PC-9 (cell line): ENCODE measurements at regions of chr1 and their contacts with region 1.

Region 1: GRCh38 chr1:6359216-6360116 is 34.1 kb downstream of the ACOT7 start:
- DNase-seq: peak; percentile 42 to 55
- H3K4me3 ChIP-seq: no peak overlapping the region
- H3K27ac ChIP-seq: no peak overlapping the region
- H3K4me1 ChIP-seq: 0 out of 2 replicates have a peak, but pooled peaks cover 5% of the 10 kb centered on the region
- H3K27me3 ChIP-seq: no peaks in the 10 kb centered on the region
- CTCF ChIP-seq: no peak

Region 2: GRCh38 chr1:6385488-6386191 is 26.2 kb after region 1 on chr1:
- CTCF ChIA-PET with region 1: interaction called, 3 read pairs
- POLR2A ChIA-PET with region 1: interaction called, 4 read pairs
- intact Hi-C with region 1: loop called (anchors 1 kb)
- DNase-seq: peak; percentile 89 to 92
- H3K4me3 ChIP-seq: peak overlapping the region; percentile 50; the same call in 1 of the 2 replicates
- H3K27ac ChIP-seq: peak overlapping the region; percentile 84
- H3K4me1 ChIP-seq: peaks cover 17% of the 10 kb centered on the region
- H3K27me3 ChIP-seq: no peaks in the 10 kb centered on the region
- CTCF ChIP-seq: no peak

Region 3: GRCh38 chr1:6393400-6394187 is 34.1 kb after region 1 on chr1 and contains the start of gene ACOT7:
- CTCF ChIA-PET with region 1: no interaction called
- POLR2A ChIA-PET with region 1: interaction called, 9 read pairs
- intact Hi-C with region 1: loop called (anchors 2 kb)
- DNase-seq: peak; percentile 69 to 86
- H3K4me3 ChIP-seq: peak within 1 kb of the TSS; percentile 60
- H3K27ac ChIP-seq: peak within 1 kb of the TSS; percentile 69
- H3K4me1 ChIP-seq: peaks cover 4% of the 10 kb centered on the region; the same call in 1 of the 2 replicates
- H3K27me3 ChIP-seq: no peaks in the 10 kb centered on the region
- CTCF ChIP-seq: no peak
- total RNA-seq, gene ACOT7: 62.2 and 70.2 TPM in 2 replicates

Region 4: DNA sequence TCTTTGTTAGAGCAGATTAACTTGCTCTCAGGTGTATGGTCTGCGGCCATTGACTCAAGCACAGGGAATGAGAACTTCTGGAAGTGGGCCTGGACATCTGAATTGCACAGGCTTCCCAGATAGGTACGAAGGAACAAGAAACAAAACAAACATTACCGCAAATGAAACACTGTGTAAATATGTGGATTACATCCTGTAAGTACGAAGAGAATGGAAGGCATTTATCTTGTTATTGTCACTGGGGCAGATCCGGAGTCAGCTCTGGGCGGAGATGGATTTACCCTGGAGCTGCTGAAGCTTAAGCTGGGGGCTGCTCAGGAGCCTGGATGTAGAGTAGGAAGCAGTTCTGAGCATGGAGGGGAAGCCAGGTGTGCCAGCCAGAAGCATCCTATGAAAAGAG is 53.4 kb after region 1 on chr1:
- CTCF ChIA-PET with region 1: interaction called, 10 read pairs
- POLR2A ChIA-PET with region 1: no interaction called
- intact Hi-C with region 1: no loop called
- DNase-seq: peak; percentile 44 to 79
- H3K4me3 ChIP-seq: no peak overlapping the region
- H3K27ac ChIP-seq: peak overlapping the region; percentile 84
- H3K4me1 ChIP-seq: peaks cover 36% of the 10 kb centered on the region
- H3K27me3 ChIP-seq: no peaks in the 10 kb centered on the region
- CTCF ChIP-seq: no peak

Region 5: GRCh38 chr1:6438047-6438525 is 78.6 kb after region 1 on chr1:
- CTCF ChIA-PET with region 1: interaction called, 3 read pairs
- POLR2A ChIA-PET with region 1: no interaction called
- intact Hi-C with region 1: loop called (anchors 1 kb)
- DNase-seq: peak; percentile 52 to 76
- H3K4me3 ChIP-seq: no peak overlapping the region
- H3K27ac ChIP-seq: no peak overlapping the region
- H3K4me1 ChIP-seq: no peaks in the 10 kb centered on the region
- H3K27me3 ChIP-seq: no peaks in the 10 kb centered on the region
- CTCF ChIP-seq: peak; percentile 89